IMR-90 (cell line): ENCODE measurements at regions of chr22 and their contacts with region 1.

Region 1: GRCh38 chr22:23539135-23539838 is 40.8 kb downstream of the IGLL1 start:
- DNase-seq: peak; percentile 69
- ATAC-seq: peak; percentile 100
- H3K4me3 ChIP-seq: no peak overlapping the region
- H3K27ac ChIP-seq: no peak overlapping the region
- H3K4me1 ChIP-seq: no peaks in the 10 kb centered on the region
- H3K27me3 ChIP-seq: peaks cover 16% of the 10 kb centered on the region; the same call in 1 of the 2 replicates
- CTCF ChIP-seq: peak; percentile 81
- POLR2A ChIP-seq: no peak
- RAD21 ChIP-seq: peak; percentile 85

Region 2: DNA sequence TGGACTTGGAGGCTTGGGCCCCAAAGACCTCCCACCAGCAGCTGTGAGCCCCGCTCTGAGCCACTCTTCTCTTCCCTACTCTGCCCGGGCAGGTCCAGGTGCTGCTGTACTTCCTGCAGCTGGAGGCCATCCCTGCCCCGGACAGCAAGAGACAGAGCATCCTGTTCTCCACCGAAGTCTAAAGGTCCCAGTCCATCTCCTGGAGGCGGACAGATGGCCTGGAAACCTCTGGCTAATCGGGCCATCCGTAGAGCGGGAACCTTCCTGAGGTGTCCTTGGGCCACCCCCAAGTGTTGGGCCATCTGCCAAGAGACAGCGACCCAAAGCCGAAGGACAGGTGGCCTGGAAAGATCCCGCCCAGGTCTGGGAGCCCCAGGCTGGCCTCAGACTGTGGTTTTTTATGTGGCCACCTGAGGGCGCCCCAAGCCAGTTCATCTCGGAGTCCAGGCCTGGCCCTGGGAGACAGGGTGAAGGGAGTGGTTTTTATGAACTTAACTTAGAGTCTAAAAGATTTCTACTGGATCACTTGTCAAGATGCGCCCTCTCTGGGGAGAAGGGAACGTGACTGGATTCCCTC is 223.9 kb before region 1 on chr22:
- CTCF ChIA-PET with region 1: no interaction called
- POLR2A ChIA-PET with region 1: no interaction called
- dilution Hi-C with region 1: no loop called
- in situ Hi-C with region 1: no loop called
- intact Hi-C with region 1: loop called (anchors 1 kb)
- DNase-seq: peak; percentile 86
- ATAC-seq: peak; percentile 74
- H3K4me3 ChIP-seq: no peak overlapping the region
- H3K27ac ChIP-seq: no peak overlapping the region
- H3K4me1 ChIP-seq: peaks cover 4% of the 10 kb centered on the region; the same call in 1 of the 2 replicates
- H3K27me3 ChIP-seq: no peaks in the 10 kb centered on the region
- CTCF ChIP-seq: peak; percentile 76
- POLR2A ChIP-seq: no peak
- RAD21 ChIP-seq: peak; percentile 82

Region 3: DNA sequence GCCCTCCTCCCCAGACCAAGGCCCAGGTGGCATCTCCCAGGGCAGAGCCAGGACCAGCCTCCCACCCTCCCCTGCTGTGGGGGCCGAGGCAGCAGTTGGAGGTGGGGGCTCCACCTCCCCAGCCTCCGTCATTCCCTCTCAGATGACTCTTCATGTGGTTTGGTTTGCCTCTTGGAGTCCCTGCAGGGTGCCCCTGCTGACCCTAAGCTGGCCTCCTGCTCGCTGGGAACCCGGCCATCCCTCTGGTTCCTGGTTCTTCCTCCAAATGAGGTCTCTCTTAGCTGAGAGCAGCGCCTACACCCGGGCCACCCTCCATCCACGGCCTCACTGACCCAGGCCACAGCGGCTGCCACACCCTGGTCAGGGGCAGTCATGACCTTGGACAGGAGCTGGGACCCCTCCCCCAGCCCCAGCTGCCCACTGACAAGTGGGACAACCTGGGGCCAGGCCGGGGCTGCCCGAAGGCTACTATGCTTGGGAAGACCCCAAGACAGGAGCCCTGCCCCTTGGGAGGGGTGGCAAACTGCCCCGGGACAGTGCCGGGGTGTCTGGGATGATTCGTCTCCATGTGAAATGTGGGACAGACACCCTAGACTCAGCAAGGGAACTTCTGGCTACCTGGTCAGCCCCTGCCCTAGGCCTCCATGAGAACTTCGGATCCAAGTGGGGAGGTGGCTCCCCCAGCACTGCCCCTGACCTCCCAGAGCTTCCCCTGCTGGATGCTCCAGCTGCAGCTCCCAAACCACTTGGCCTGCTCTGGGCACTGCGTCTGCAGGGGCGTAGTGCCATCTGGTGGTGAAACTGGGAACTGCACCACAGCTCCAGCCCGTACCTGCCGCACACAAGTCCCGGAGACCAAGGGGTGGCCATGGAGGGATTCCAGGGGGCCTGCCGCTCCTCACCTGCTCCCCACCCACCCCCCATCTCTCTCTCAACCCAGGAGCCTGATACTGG is 153.7 kb before region 1 on chr22:
- CTCF ChIA-PET with region 1: no interaction called
- POLR2A ChIA-PET with region 1: no interaction called
- dilution Hi-C with region 1: no loop called
- in situ Hi-C with region 1: no loop called
- intact Hi-C with region 1: loop called (anchors 1 kb)
- DNase-seq: peak; percentile 71
- ATAC-seq: peak; percentile 98
- H3K4me3 ChIP-seq: no peak overlapping the region
- H3K27ac ChIP-seq: no peak overlapping the region
- H3K4me1 ChIP-seq: no peaks in the 10 kb centered on the region
- H3K27me3 ChIP-seq: peaks cover 3% of the 10 kb centered on the region; the same call in 1 of the 2 replicates
- CTCF ChIP-seq: peak; percentile 96
- POLR2A ChIP-seq: no peak
- RAD21 ChIP-seq: peak; percentile 93

Region 4: DNA sequence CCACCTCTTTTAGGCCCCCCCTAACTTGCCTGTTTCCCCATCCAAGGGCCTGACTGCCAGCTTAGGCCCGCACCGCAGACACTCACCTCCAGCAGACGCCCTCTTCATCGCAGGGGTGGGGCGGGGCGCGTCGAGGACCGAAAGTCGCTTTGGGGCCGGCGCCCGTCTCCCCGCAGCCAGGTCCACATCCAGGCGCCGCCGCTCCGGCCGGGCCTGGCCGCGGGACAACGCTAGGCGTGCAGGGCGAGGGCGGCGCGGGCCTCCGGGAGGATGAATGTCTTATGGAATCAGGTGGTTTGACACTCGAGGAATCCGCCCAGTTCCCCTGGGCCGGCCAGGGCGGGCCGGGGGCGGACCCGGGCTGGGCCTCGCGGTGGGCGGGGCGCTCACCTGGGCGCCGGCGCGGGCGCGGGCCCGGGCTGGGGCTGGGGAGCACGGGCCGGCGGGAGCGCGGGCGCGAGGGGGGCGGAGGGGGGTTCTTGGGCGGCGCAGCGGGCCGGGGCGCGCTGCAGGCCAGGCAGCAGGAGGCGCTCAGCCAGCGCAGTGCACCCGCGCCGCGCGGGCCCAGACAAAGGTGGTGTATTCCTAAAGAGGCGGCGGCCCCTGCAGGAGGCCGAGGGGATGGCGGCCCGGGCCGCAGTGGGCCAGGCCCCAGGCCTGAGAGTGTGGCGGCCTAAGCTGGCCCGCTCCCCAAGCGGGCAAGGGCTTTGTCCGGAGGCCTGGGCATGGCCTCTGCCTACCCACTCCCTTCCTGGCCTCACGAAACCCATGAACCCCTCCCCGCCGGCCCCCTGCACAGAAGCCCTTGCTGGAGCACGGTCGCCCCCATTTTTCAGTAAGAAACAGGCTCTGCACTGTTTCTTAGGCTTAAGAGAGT is 136.8 kb before region 1 on chr22:
- CTCF ChIA-PET with region 1: no interaction called
- POLR2A ChIA-PET with region 1: no interaction called
- dilution Hi-C with region 1: no loop called
- in situ Hi-C with region 1: no loop called
- intact Hi-C with region 1: loop called (anchors 5 kb)
- DNase-seq: peak; percentile 19
- ATAC-seq: peak; percentile 65
- H3K4me3 ChIP-seq: no peak overlapping the region
- H3K27ac ChIP-seq: no peak overlapping the region
- H3K4me1 ChIP-seq: peaks cover 4% of the 10 kb centered on the region; the same call in 1 of the 2 replicates
- H3K27me3 ChIP-seq: peaks cover 1% of the 10 kb centered on the region; the same call in 1 of the 2 replicates
- CTCF ChIP-seq: peak; percentile 49
- POLR2A ChIP-seq: no peak
- RAD21 ChIP-seq: peak; percentile 37

Region 5: DNA sequence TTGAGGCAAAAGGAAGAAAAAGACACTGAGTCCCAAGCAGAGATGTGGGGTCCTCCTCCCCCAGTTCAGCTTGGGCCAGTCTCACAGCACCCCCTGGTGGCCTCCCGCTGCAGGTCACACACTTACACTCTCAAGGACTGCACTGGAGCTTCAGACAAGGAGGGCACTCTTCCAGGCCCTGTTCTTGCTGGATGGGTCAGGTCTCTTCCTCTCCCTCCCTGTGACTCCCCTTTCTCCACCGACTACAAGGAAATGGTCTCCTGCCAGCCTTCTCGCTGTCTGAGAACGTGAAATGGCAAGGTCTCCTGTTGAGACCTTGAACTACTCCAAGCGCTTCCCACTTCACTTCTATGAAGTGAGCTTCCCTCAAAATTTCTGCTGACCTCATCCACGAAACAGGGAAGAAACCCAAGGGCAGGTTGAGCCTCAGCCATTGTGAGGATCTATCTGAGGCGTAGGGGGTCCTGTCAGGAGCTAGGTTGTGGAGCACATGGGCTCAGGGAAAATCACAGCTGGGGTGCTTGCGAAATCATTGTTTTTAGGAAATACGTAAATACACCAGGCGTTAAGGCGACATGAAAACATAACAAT is 52.0 kb after region 1 on chr22:
- CTCF ChIA-PET with region 1: interaction called, 3 read pairs
- POLR2A ChIA-PET with region 1: no interaction called
- dilution Hi-C with region 1: no loop called
- in situ Hi-C with region 1: no loop called
- intact Hi-C with region 1: loop called (anchors 1 kb)
- DNase-seq: peak; percentile 54
- ATAC-seq: peak; percentile 99
- H3K4me3 ChIP-seq: no peak overlapping the region
- H3K27ac ChIP-seq: no peak overlapping the region
- H3K4me1 ChIP-seq: no peaks in the 10 kb centered on the region; the same call in 1 of the 2 replicates
- H3K27me3 ChIP-seq: peaks cover 2% of the 10 kb centered on the region
- CTCF ChIP-seq: peak; percentile 73
- POLR2A ChIP-seq: no peak
- RAD21 ChIP-seq: peak; percentile 84

Region 6: GRCh38 chr22:23767673-23768548 is 228.6 kb after region 1 on chr22 and contains the start of gene CHCHD10:
- CTCF ChIA-PET with region 1: no interaction called
- POLR2A ChIA-PET with region 1: no interaction called
- dilution Hi-C with region 1: no loop called
- in situ Hi-C with region 1: no loop called
- intact Hi-C with region 1: loop called (anchors 5 kb)
- DNase-seq: peak; percentile 50
- ATAC-seq: peak; percentile 57
- H3K4me3 ChIP-seq: peak within 1 kb of the TSS; percentile 43
- H3K27ac ChIP-seq: no peak within 1 kb of the TSS
- H3K4me1 ChIP-seq: peaks cover 10% of the 10 kb centered on the region
- H3K27me3 ChIP-seq: no peaks in the 10 kb centered on the region
- CTCF ChIP-seq: peak; percentile 75
- POLR2A ChIP-seq: no peak
- RAD21 ChIP-seq: peak; percentile 65
- total RNA-seq, gene CHCHD10: 1.4 and 2.2 TPM in 2 replicates

Region 7: DNA sequence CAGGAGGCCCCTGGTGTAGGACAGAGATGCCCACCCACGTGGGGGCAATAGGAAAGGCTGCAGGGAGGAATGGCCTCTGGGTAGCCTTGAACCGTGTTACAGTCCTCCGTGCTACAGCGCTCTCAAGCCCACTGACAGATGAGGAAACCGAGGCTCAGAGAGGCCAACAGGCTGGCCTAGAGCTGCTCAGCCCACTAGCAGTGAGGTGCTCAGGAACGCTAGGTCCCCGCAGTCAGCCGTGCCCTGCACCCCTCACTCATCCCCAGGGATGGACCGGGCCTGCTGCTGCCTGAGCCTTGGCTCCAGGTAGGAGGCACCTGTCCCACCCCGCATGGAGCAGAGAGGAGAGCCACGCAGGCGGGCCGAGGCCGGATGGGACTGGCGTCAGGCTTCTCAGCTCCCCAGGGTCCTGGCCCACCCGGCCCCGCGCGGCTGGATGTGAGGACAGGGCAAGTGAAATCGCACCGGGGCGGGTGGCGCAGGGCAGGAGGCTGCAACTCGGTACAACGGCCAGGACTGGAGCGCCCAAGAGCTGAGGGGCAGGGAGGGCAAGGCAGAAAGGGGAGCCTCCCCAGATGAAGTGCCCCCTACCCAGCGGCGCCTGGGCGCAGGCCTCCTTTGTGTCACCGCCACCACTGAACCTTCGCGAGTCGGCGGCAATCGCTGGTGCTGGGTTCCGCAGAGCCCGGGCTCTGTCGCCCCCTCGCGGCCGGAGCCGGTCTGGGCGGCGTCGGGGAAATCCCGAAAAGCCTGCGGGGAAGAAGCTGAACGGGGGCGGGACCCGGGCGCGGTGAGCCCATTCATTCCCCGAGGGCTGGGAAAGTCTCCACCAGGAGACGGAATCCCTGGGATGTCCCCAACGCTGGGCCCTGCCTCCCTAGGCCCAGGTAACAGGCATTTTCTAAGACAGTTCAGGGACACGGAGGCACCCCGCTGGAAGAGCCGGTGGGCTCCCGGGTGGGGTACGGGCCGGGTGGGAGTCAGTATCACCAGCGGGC is 310.0 kb after region 1 on chr22:
- CTCF ChIA-PET with region 1: interaction called, 5 read pairs
- POLR2A ChIA-PET with region 1: no interaction called
- dilution Hi-C with region 1: no loop called
- in situ Hi-C with region 1: no loop called
- intact Hi-C with region 1: loop called (anchors 5 kb)
- DNase-seq: peak; percentile 51
- ATAC-seq: peak; percentile 98
- H3K4me3 ChIP-seq: no peak overlapping the region
- H3K27ac ChIP-seq: no peak overlapping the region
- H3K4me1 ChIP-seq: peaks cover 17% of the 10 kb centered on the region
- H3K27me3 ChIP-seq: no peaks in the 10 kb centered on the region
- CTCF ChIP-seq: peak; percentile 99
- POLR2A ChIP-seq: peak; percentile 48; the same call in 1 of the 2 replicates
- RAD21 ChIP-seq: peak; percentile 98